MCF 10A (cell line): ENCODE measurements at regions of chr7 and their contacts with region 1.

Region 1: GRCh38 chr7:75842836-75843446 is 29.3 kb upstream of the CCL24 start:
- DNase-seq: peak; percentile 96
- H3K4me3 Mint-ChIP-seq: peak overlapping the region; percentile 49
- H3K27ac Mint-ChIP-seq: peak overlapping the region; percentile 95
- H3K4me1 Mint-ChIP-seq: peaks cover 14% of the 10 kb centered on the region
- H3K27me3 Mint-ChIP-seq: no peaks in the 10 kb centered on the region
- CTCF ChIP-seq: no peak

Region 2: DNA sequence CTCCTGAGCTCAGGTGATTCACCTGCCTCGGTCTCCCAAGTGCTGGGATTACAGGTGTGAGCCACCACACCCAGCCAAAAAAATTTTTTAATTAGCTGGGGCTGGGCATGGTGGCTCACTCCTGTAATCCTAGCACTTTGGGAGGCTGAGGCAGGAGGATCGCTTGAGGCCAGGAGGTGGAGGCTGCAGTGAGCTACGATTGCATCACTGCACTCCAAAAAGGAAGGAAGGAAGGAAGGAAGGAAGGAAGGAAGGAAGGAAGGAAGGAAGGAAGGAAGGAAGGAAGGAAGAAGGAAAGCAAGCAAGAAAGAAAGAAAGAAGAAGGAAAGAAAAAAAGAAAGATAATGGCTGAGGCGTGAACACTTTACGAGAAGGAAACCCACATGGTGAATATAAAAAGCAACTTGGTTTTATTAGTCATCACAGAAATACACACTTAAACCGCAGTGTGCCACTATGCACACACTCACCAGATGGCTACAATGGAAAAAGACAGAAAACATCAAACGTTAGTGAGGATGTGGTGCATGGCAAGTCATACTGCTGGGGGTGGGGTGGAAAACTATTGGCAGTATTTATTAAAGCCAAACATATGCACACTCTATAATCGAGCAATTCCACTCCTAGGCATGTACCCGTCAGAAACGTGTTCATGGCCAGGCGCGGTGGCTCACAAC is 66.5 kb before region 1 on chr7:
- CTCF ChIA-PET with region 1: no interaction called
- POLR2A ChIA-PET with region 1: no interaction called
- intact Hi-C with region 1: loop called (anchors 10 kb)
- DNase-seq: peak; percentile 59
- H3K4me3 Mint-ChIP-seq: no peak overlapping the region
- H3K27ac Mint-ChIP-seq: no peak overlapping the region
- H3K4me1 Mint-ChIP-seq: peaks cover 12% of the 10 kb centered on the region
- H3K27me3 Mint-ChIP-seq: peaks cover 26% of the 10 kb centered on the region
- CTCF ChIP-seq: peak; percentile 17